Activated CD8-positive, alpha-beta T cell treated with anti-CD3 and anti-CD28 coated beads for 36 hours (primary cell): ENCODE measurements at regions of chr1 and their contacts with region 1.

Region 1: GRCh38 chr1:19260211-19261138 is 8.9 kb downstream of the MRTO4 start:
- DNase-seq: no peak
- ATAC-seq: no peak
- H3K4me3 Mint-ChIP-seq: no peak overlapping the region
- H3K27ac Mint-ChIP-seq: no peak overlapping the region
- H3K4me1 Mint-ChIP-seq: peaks cover 17% of the 10 kb centered on the region
- H3K27me3 Mint-ChIP-seq: no peaks in the 10 kb centered on the region
- CTCF ChIP-seq: no peak

Region 2: DNA sequence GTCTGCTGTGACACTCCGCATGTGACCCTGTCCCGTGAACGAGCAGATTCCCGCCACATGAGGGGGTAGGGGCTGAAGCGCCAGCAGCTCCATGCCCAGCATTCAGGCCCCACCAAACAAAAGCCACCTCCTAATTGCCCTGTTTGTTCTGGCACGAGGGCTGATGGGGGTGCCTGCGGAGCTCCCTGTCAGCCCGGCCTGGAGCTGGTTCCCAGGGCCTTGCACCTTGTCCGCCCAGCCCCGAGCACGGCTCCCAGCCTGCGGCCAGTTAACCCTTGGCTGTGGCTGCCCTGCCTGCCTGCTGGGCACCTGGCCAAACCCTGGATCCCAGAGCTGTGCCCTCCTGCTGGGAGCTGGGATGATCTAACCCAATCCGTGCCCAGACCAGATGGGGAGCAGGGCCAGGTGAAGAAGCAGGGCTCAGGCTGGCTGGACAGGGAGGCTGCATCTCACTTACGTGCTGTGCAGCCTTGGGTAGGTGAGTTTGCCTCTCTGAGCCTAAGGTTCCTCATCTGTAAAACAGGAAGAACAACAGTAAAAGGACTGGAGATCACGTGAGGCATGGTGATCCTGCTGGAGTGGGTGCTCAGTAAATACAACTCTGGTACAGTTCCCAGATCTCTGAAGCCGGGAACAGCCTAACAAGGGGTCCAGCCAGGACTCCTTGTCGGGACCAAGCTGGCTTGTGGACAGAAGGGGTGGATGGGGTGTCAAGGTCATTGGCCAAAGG is 193.1 kb before region 1 on chr1:
- CTCF ChIA-PET with region 1: no interaction called
- POLR2A ChIA-PET with region 1: no interaction called
- intact Hi-C with region 1: no loop called
- DNase-seq: no peak
- ATAC-seq: no peak
- H3K4me3 Mint-ChIP-seq: no peak overlapping the region
- H3K27ac Mint-ChIP-seq: no peak overlapping the region
- H3K4me1 Mint-ChIP-seq: no peaks in the 10 kb centered on the region
- H3K27me3 Mint-ChIP-seq: no peaks in the 10 kb centered on the region
- CTCF ChIP-seq: no peak

Region 3: GRCh38 chr1:19203440-19203839 is 57.0 kb before region 1 on chr1:
- CTCF ChIA-PET with region 1: no interaction called
- POLR2A ChIA-PET with region 1: no interaction called
- intact Hi-C with region 1: no loop called
- DNase-seq: no peak
- ATAC-seq: no peak
- H3K4me3 Mint-ChIP-seq: no peak overlapping the region
- H3K27ac Mint-ChIP-seq: no peak overlapping the region
- H3K4me1 Mint-ChIP-seq: peaks cover 57% of the 10 kb centered on the region
- H3K27me3 Mint-ChIP-seq: no peaks in the 10 kb centered on the region
- CTCF ChIP-seq: no peak

Region 4: DNA sequence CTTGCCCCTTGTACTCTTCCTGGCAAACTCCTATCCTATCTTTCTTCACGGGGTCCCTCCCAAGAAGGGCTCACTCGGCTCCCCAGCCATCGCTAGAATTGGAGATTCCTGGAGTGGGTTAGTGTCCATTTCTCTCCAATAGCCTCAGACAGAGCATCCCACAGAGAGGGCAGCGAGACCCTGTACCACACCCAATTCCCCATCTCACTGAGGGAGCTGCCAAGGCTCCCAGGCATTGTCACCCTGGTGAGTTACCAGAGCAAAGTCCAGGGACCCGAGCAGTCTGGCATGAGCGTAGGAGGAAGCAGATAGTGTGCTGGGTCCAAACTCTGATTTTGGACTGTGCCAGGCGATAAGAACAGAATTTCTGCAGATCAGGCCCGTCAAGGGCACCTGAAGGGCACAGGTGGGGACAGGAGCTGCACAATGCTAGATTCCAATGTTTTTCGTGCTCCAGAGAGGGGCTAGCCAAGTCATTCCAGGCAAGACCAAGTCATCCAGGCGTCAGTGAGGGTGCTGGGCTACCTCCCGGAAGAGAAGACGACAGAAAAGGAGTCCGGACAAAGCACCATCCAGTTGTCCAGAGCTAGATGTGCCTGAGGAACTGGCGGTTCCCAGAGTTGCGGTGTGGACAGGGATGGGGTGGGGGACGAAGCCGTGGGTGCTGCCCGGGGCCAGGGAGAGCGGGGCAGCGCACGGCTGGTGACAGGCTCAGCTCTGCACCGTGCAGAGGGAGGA is 12.8 kb after region 1 on chr1:
- CTCF ChIA-PET with region 1: no interaction called
- POLR2A ChIA-PET with region 1: interaction called, 10 read pairs
- intact Hi-C with region 1: no loop called
- DNase-seq: no peak
- ATAC-seq: no peak
- H3K4me3 Mint-ChIP-seq: no peak overlapping the region
- H3K27ac Mint-ChIP-seq: no peak overlapping the region
- H3K4me1 Mint-ChIP-seq: peaks cover 2% of the 10 kb centered on the region
- H3K27me3 Mint-ChIP-seq: peaks cover 13% of the 10 kb centered on the region
- CTCF ChIP-seq: no peak

Region 5: DNA sequence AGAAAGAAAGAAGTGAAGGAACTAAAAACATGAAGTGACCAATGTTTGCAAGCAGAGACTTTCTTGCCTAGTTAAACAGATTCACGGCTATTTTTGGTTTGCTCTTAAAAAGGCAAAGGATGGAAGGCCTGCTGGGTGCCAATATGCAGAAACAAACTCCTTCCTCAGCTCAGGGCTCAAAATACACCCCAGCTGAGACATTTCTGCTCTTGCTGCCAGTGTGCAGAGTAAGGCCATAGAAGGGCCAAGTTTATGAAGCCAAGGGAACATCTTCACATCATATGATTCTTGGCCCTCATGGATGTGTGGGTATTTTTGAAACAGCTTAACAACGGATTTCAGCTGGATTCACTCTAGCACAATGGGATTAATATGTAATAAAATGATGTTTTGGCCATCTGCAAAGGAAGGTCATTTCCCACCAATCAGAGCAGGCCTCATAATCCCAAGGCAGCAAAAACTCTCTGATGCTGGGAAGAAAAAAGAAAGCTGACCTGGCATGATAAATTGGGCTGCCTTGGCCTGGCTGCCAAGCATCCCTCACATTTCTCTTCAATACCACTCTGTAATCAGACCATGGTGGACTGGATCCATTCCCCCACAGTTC is 154.1 kb after region 1 on chr1:
- CTCF ChIA-PET with region 1: no interaction called
- POLR2A ChIA-PET with region 1: no interaction called
- intact Hi-C with region 1: no loop called
- DNase-seq: no peak
- ATAC-seq: no peak
- H3K4me3 Mint-ChIP-seq: no peak overlapping the region
- H3K27ac Mint-ChIP-seq: peak overlapping the region; percentile 58
- H3K4me1 Mint-ChIP-seq: peaks cover 66% of the 10 kb centered on the region
- H3K27me3 Mint-ChIP-seq: no peaks in the 10 kb centered on the region
- CTCF ChIP-seq: no peak